ENCODE measurements at regions of chr3 and their contacts with region 1.

Region 1: GRCh38 chr3:4350789-4351163 is 47.6 kb downstream of the SETMAR start:
- DNase-seq: peak; percentile 47
- ATAC-seq: peak; percentile 73
- H3K4me3 ChIP-seq: peak overlapping the region in 1 of 2 experiments; percentile 20; a peak in 2 of 4 replicates
- H3K27ac ChIP-seq: no peak overlapping the region
- H3K4me1 ChIP-seq: no peaks in the 10 kb centered on the region
- H3K27me3 ChIP-seq: no peaks in the 10 kb centered on the region
- CTCF ChIP-seq: peak; percentile 75

Region 2: DNA sequence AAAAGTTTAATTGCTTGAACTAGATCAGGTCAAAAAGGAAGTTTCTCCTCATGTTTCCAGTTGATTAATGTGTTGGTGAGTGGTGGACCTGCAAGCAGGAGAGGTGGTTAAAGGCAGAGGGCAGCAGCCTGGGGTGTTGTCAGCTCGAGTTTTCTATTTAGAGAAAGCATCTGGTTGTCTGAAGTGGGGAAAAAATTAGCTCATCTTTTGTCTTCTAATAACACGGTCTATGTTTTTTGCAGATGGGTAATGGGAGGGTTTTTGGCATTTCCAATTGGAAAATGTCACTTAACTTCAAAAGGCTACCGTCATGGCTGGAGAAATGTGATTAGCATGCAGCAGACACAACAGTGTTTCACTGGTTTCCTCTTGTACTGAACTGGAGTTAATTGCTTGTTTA is 265.0 kb after region 1 on chr3:
- CTCF ChIA-PET with region 1: interaction called, 13 read pairs
- POLR2A ChIA-PET with region 1: no interaction called
- in situ Hi-C with region 1: no loop called
- intact Hi-C with region 1: no loop called
- DNase-seq: no peak
- ATAC-seq: no peak
- H3K4me3 ChIP-seq: no peak overlapping the region
- H3K27ac ChIP-seq: no peak overlapping the region
- H3K4me1 ChIP-seq: no peaks in the 10 kb centered on the region
- H3K27me3 ChIP-seq: no peaks in the 10 kb centered on the region
- CTCF ChIP-seq: no peak

Region 3: DNA sequence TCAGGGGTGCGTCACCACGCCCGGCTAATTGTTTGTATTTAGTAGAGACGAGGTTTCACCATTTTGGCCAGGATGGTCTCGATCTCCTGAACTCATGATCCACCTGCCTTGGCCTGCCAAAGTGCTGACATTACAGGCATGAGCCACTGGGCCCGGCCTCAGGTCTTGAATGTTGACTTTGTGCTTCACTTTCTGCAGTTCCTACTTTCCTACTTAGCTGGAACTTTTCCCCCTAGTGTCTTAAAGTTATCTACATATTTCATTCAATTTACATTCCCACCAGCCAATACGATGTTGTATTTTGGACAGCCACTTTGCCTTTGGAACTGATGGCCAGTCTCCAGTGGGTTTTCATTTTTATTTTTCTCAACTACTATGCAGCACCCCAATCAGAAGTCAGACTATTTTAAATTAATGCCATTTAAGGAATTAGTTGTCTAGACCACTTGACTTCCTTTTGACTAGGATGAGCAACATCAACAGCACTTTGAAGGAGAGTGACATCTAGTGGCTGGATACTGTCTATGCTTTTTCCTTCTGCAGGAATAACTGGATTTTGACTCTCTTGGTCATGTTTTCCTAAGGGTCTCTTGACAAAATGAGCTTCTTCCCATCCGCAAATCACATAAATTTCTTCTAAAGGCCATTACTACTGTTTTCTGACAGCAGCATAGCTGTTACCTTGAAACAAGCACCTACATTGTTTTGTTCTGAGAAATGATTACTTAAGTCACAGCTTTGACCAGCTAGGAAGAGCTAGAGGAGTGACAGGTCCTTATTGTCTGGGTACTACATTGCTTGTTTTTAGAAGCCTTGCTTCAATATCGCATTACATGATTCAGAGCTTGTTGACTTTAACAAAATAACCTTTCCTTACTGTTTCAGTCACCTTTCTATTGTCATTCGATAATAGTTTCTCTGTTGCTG is 282.6 kb after region 1 on chr3:
- CTCF ChIA-PET with region 1: interaction called, 13 read pairs
- POLR2A ChIA-PET with region 1: no interaction called
- in situ Hi-C with region 1: no loop called
- intact Hi-C with region 1: loop called (anchors 1 kb)
- DNase-seq: peak; percentile 65
- ATAC-seq: peak; percentile 73; the same call in 1 of the 2 replicates
- H3K4me3 ChIP-seq: no peak overlapping the region
- H3K27ac ChIP-seq: no peak overlapping the region
- H3K4me1 ChIP-seq: no peaks in the 10 kb centered on the region
- H3K27me3 ChIP-seq: no peaks in the 10 kb centered on the region
- CTCF ChIP-seq: peak; percentile 78

Region 4: DNA sequence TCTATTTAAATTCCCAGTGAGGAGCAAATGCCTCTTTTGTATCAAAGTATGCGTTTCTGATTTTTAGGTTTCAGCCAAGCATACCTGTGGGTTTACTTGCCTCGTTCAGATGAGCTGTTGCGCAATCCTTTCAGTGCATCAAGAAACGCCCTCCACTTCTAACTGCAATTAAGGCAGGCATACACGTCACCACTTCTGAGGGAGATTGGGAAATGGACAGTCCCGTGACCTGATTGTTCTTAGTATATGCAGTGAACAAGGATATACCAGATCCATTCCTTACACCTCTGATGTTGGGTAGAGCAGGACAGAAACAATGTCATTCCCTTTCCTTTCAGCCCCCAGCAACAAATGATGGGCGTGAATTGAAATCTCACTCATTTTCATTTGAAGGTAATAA is 361.4 kb after region 1 on chr3:
- CTCF ChIA-PET with region 1: interaction called, 10 read pairs
- POLR2A ChIA-PET with region 1: no interaction called
- in situ Hi-C with region 1: no loop called
- intact Hi-C with region 1: no loop called
- DNase-seq: no peak
- ATAC-seq: no peak
- H3K4me3 ChIP-seq: no peak overlapping the region
- H3K27ac ChIP-seq: peak overlapping the region; percentile 23; the same call in 1 of the 2 replicates
- H3K4me1 ChIP-seq: peaks cover 5% of the 10 kb centered on the region
- H3K27me3 ChIP-seq: no peaks in the 10 kb centered on the region
- CTCF ChIP-seq: no peak